Left lung (tissue), 14 donors: ENCODE measurements at regions of chr5 and their contacts with region 1.

Region 1: DNA sequence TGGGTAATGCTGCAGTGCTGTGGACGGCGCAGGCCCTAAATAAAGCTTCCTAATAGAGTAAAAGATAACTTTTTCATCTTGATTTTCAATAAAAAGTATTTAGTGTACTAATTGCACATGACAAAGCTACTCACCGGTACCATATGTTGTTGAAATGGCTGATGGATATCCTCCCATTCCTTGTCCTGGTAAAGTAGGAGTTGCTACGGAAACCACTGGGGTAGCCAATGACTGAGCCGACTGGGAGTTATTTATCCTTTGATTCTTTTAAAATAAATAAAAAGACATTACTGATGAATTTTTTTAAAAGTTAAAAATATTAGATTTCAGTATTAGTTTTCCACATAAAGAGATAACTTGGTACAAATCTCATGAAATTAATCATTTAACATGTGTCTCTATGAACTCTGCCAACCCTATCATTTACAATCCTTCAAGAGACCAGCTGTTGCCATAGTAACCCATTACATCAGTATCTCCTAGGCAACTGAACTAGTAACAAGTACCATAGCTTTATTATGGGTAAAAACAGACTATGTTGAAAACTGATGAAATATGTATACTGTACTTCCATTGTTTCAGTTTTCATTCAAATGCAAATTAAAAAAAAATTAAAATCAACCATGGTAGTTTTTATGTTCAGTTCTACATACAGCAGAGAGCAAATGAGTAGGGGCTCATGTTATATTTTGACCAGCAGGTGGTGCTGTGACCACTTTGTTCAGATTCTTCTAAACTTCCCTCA is 153.7 kb downstream of the MEF2C start:
- DNase-seq: peak in 3 of 4 donors; percentile 50 to 85 (median 78)
- ATAC-seq: peak; percentile 93
- H3K4me3 ChIP-seq: no peak overlapping the region
- H3K27ac ChIP-seq: no peak overlapping the region
- H3K4me1 ChIP-seq: peaks cover 0 to 25% of the 10 kb centered on the region in 2 donors
- H3K27me3 ChIP-seq: no peaks in the 10 kb centered on the region
- CTCF ChIP-seq: peak; percentile 83 to 84

Region 2: DNA sequence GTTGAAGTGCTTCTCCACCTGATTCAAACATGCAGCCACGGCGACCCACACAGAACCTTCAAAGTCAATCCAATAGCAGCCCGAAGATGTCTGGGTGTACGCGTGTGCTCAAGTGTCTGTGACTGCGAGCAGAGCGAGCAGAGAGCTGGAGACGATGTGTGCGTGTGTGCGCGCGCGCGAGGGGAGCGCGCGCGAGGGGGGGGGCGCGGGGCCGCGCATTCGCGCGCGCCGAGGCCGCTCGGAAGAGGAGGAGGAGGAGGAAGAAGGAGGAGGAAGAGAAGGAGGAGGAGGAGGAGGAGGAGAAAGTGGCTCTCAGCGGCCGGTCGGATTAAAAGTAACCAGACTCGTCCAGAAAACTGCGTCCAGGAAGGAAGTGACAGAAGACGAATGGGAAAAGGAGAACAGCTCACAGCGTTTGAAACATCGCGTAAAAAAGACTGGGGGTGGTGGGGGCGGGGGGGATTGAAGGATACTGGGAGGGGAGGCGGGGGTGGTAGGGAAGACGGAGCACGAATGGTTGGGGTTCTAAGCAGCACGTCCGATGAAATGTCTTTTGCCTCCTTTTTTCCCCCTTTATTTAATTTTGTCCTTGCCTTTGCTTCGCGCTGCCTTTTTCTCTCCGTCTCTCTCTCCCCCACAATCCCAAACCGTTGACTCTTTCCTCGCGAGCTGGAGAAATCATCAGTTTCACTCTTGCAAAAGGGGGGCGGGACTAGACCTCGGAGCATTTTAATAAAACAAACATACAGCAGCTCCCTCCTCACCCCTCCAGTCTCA is 154.0 kb after region 1 on chr5 and contains the start of gene MEF2C:
- intact Hi-C with region 1: loop called in 1 of 2 experiments (anchors 10 kb)
- DNase-seq: peak; percentile 79 to 91 (median 88)
- ATAC-seq: peak; percentile 82
- H3K4me3 ChIP-seq: peak within 1 kb of the TSS; percentile 63 to 70
- H3K27ac ChIP-seq: peak within 1 kb of the TSS; percentile 91 to 93
- H3K4me1 ChIP-seq: peaks cover 0 to 62% of the 10 kb centered on the region in 2 donors
- H3K27me3 ChIP-seq: peaks cover 0 to 8% of the 10 kb centered on the region in 2 donors
- CTCF ChIP-seq: no peak
- polyA plus RNA-seq, gene MEF2C: 78.6 to 97.3 (median 82.8) TPM

Region 3: GRCh38 chr5:90264689-90265544 is 1535.7 kb after region 1 on chr5:
- intact Hi-C with region 1: loop called in 1 of 2 experiments (anchors 10 kb)
- DNase-seq: peak in 3 of 4 donors; percentile 38 to 81 (median 65)
- ATAC-seq: peak; percentile 83
- H3K4me3 ChIP-seq: no peak overlapping the region
- H3K27ac ChIP-seq: no peak overlapping the region
- H3K4me1 ChIP-seq: no peaks in the 10 kb centered on the region
- H3K27me3 ChIP-seq: no peaks in the 10 kb centered on the region
- CTCF ChIP-seq: peak; percentile 74 to 88